ENCODE measurements at regions of chr17 and their contacts with region 1.

Region 1: GRCh38 chr17:21457051-21458026 is 81.2 kb downstream of the KCNJ12 start:
- DNase-seq: peak; percentile 41
- H3K4me3 ChIP-seq: no peak overlapping the region
- H3K27me3 ChIP-seq: peaks cover 13% of the 10 kb centered on the region
- CTCF ChIP-seq: peak; percentile 92

Region 2: GRCh38 chr17:21475571-21475970 is 18.2 kb after region 1 on chr17:
- CTCF ChIA-PET with region 1: interaction called, 12 read pairs
- POLR2A ChIA-PET with region 1: no interaction called
- DNase-seq: no peak
- H3K4me3 ChIP-seq: no peak overlapping the region
- H3K27me3 ChIP-seq: peaks cover 14% of the 10 kb centered on the region
- CTCF ChIP-seq: no peak

Region 3: DNA sequence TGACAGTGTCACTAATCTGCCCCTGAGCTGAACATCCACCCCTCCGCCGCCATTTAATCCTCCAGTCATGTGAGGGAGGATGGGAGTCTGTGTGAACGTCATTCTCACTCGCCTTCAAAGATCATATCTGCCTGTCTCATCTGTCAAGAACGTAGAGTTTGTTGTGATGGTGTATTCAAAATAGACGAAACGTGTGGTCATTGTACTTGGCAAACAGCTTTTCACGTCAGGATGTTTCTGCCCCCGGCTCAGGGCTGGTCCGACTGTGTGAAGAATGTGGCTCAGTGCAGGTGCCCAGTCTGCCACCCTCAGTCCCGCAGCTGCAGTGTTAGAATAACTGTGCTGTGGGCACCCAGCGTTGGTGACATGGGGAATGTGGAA is 66.9 kb after region 1 on chr17:
- CTCF ChIA-PET with region 1: interaction called, 12 read pairs
- POLR2A ChIA-PET with region 1: no interaction called
- DNase-seq: no peak
- H3K4me3 ChIP-seq: no peak overlapping the region
- H3K27me3 ChIP-seq: no peaks in the 10 kb centered on the region
- CTCF ChIP-seq: no peak

Measured in BJ (cell line).